ENCODE measurements at regions of chr5 and their contacts with region 1.

Region 1: DNA sequence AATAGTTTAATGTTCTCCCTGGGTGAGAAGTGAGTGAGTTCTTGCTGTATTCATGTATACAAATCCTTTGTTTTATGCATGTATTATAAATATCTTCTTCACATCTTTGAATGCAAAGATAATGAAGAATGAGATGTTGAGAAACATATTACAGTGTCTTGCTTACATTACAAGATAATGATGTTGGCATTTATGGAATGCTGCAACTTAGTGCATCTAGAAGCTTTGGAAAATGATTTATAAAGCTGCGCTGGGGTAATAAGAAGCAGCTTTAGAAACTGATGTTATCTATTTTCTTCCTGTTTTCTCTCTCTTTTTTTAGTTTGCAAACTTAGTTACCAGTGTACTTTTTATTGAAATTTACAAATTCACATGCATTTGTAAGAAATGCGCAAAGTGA is 673.4 kb downstream of the KCTD16 start:
- DNase-seq: no peak
- H3K4me3 ChIP-seq: no peak overlapping the region
- H3K27ac ChIP-seq: no peak overlapping the region
- H3K4me1 ChIP-seq: no peaks in the 10 kb centered on the region
- CTCF ChIP-seq: no peak

Region 2: DNA sequence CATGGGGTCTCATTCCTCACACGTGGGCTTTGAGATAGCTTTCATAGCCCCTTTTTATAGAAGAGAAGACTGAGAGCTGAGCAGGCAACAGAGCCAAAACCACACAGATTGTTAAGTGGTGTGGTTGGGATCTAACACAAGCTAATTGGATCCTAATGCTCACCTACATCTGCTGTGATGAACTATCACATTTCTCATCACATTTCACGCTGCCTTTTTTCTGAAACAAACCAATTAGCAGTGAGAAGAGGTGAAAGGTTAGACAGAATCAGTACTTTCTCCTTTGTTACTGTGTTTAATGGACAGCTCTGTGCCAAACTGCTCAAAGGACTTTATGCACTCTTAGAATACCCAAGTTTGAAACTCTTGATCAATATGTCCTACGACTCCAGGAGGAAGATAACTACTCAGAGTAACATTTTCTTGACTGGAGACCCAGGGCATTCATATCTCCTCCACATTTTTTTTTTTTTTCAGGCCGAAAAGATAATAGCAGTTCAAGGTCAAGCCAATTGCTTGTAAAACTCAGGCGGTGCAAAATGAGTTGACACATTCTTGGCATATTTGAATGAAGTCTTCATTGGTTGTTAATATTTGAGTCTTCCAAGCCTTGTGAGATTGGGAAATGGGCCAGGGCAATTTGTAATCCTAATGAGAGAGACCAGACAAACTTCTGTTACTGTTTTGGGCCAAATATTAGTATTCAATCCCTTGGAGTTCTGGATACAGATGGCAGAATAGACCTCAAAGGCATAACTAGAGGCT is 535.0 kb before region 1 on chr5:
- CTCF ChIA-PET with region 1: no interaction called
- POLR2A ChIA-PET with region 1: no interaction called
- intact Hi-C with region 1: loop called (anchors 5 kb)
- DNase-seq: no peak
- H3K4me3 ChIP-seq: no peak overlapping the region
- H3K27ac ChIP-seq: no peak overlapping the region
- H3K4me1 ChIP-seq: no peaks in the 10 kb centered on the region
- CTCF ChIP-seq: no peak